SK-N-SH (cell line): ENCODE measurements at regions of chr1 and their contacts with region 1.

Region 1: DNA sequence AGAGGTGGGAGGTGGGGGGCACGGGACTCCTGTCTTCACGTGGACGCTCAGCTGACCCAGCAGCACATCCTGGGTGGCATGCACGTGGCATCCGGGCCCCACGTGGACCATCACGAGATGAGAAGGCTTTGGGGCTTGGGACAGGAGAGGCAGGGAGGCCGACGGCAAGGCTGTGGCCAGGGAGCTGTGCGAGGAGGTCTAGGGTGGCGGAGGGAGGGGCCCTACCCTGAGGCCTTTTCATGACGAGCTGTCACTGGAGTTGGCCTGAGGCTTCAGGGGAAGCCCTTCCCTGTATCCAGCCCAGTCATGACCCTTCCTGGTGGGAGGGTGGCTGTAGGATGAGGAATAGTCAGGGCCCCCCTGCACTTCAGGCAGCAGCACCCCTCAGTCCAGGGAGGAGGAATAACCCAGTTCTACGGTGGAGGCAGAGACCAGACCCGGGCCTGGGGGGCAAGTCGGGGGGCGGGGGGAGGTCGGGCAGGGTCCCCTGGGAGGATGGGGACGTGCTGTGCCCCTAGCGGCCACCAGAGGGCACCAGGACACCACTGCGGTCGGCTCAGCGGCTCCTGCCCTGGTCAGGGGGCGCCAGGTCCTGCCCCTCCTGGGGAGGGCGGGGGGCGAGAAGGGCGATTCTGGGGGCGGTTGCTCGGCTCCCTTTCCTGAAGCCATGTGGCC is 2.0 kb upstream of the PERM1 start:
- DNase-seq: peak; percentile 92
- H3K4me3 ChIP-seq: peak overlapping the region in 1 of 2 experiments; percentile 32; a peak in 1 of 4 replicates
- H3K27ac ChIP-seq: no peak overlapping the region
- H3K4me1 ChIP-seq: peaks cover 0 to 9% of the 10 kb centered on the region in 2 experiments; a peak in 1 of 4 replicates
- H3K27me3 ChIP-seq: peaks cover 30% of the 10 kb centered on the region; the same call in 1 of the 2 replicates
- CTCF ChIP-seq: peak; percentile 76
- EP300 ChIP-seq: no peak
- RAD21 ChIP-seq: peak; percentile 71

Region 2: DNA sequence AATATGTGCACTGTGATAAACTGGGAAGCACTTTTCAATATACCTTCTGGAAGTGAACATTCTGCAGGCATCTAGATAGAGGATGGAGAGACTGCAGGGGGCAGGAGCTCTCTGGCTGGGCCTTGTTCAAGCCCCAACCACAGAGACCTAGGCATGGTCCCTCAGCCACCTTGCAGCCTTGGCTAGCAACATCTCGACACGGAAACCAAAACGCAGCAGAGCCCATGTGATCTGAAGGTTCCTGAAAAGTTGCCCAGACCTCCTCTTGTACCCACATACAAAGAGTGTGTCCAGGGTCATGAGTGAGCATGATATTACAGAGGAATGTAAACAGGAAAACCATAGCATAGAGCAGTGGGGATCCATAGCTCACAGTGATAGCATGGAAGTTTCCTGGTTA is 93.3 kb before region 1 on chr1:
- CTCF ChIA-PET with region 1: no interaction called
- POLR2A ChIA-PET with region 1: no interaction called
- DNase-seq: no peak
- H3K4me3 ChIP-seq: no peak overlapping the region
- H3K27ac ChIP-seq: no peak overlapping the region
- H3K4me1 ChIP-seq: no peaks in the 10 kb centered on the region
- H3K27me3 ChIP-seq: peaks cover 12% of the 10 kb centered on the region
- CTCF ChIP-seq: no peak
- EP300 ChIP-seq: no peak
- RAD21 ChIP-seq: no peak

Region 3: DNA sequence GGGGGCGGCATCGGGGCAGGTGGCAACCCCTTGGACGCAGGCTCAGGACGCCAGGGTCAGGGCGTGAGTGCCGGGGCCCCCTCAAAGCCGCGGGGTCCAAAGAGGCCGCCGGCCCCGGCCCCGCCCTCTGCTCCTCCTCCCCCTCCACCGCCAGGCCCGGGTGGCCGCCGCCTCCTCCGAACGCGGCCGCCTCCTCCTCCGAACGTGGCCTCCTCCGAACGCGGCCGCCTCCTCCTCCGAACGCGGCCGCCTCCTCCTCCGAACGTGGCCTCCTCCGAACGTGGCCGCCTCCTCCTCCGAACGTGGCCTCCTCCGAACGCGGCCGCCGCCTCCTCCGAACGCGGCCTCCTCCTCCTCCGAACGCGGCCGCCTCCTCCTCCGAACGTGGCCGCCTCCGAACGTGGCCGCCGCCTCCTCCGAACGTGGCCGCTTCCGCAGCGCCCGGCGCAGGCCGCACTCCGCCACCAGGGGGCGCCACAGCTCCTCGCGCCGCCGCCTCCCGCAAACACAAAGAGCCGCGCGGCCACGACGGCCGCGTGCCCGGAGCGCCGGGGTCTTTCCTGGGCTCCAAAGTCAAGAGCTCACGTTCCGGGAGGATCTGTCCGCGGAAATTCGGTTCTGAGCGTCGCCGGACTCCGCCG is 79.5 kb before region 1 on chr1:
- CTCF ChIA-PET with region 1: interaction called, 13 read pairs
- POLR2A ChIA-PET with region 1: no interaction called
- DNase-seq: peak; percentile 93
- H3K4me3 ChIP-seq: peak overlapping the region; percentile 42 to 44; a peak in 3 of 4 replicates
- H3K27ac ChIP-seq: no peak overlapping the region; a peak in 1 of 4 replicates
- H3K4me1 ChIP-seq: peaks cover 0 to 18% of the 10 kb centered on the region in 2 experiments; a peak in 1 of 4 replicates
- H3K27me3 ChIP-seq: no peaks in the 10 kb centered on the region
- CTCF ChIP-seq: peak; percentile 62
- EP300 ChIP-seq: no peak
- RAD21 ChIP-seq: peak; percentile 82

Region 4: DNA sequence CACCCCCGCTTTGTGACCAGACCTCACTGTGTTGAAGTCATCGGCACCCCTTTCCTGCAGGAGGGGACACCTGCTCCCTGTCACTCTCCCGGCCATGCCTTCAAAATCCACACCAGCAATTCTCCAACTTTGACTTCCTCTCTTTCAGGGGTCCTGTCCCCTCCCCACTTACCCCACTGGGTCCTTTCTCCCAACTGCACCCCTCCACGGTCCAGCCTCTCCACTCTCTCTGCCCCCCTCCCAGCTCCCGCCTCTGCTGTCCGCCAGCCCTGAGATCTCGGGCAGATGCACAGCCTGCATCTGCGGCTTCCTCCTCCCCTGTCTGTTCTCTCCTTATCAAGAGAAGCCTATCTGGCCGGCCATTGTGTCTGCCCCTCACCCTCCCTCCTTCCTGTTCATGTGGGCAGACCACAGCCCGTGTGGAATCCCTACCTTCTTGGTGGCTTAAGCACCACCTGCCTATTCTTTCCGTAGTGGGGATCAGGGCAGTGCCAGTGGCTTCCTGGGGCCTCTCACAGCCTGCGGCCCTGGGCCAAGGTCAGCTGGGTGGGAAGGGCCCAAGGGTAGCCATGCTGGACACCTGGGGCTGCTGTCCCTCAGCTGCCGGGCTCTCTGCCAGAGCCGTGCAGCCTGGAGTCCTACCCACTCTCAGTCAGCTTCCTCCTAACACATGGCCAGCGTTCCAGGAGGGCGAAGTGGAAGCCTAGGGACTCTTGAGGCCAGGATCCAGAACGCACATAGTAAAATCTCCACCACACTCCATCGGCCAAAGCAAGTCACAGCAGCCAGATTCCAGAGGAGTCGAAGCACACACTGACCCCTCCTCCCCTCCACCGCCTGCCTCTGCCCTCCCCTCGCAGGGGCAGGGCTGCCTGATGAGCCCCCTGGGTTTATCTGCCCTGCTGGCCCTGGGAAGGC is 21.1 kb after region 1 on chr1:
- CTCF ChIA-PET with region 1: interaction called, 246 read pairs
- POLR2A ChIA-PET with region 1: no interaction called
- DNase-seq: peak; percentile 90
- H3K4me3 ChIP-seq: peak overlapping the region in 1 of 2 experiments; percentile 18; a peak in 1 of 4 replicates
- H3K27ac ChIP-seq: peak overlapping the region in 1 of 2 experiments; percentile 98; a peak in 2 of 4 replicates
- H3K4me1 ChIP-seq: peaks cover 0 to 43% of the 10 kb centered on the region in 2 experiments; a peak in 1 of 4 replicates
- H3K27me3 ChIP-seq: peaks cover 7% of the 10 kb centered on the region; the same call in 1 of the 2 replicates
- CTCF ChIP-seq: no peak
- EP300 ChIP-seq: peak in 1 of 2 experiments; percentile 25; a peak in 1 of 4 replicates
- RAD21 ChIP-seq: no peak

Region 5: DNA sequence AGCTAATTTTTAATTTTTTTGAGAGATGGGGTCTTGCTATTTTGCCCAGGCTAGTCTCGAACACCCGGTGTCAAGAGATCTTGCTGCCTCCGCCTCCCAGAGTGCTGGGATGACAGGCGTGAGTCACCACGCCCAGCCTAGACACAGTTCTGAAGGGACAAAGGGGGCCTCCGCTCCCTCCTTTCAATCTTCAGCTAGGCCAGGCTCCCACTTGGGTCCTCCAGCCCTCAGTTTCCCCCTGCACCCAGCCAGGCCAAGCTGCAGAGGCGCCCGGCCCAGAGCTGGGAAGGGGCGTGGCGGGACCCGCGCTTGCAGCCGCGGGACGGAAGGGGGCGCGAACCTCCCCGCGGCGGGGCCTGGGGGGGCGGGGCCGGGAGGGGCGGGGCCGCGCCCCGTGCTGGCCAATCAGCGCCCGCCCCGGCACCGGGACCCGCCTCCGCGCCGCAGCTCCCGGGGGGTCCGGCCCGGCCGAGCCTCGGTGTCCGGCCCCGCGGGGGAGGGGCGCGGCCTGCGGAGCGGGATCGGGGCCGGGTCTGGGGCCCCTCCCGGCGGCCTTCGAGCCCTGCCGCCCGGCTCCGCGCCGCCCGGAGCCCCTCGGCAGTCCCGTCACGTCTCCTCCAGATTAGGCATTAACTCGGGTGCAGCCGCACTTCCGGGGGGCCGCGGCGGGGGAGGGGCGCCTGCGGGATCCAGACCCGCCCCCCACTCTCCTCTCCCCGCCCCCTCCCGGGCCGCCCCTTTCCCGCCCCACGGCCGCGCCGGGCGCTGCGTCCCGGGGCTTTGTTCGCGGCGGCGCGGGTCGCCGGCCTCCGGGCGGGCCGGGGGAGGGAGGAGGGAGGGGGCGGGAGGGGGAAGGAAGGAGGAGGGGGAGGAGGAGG is 35.4 kb after region 1 on chr1:
- CTCF ChIA-PET with region 1: interaction called, 30 read pairs
- POLR2A ChIA-PET with region 1: interaction called, 3 read pairs
- DNase-seq: peak; percentile 99
- H3K4me3 ChIP-seq: peak overlapping the region in 1 of 2 experiments; percentile 50; a peak in 2 of 4 replicates
- H3K27ac ChIP-seq: peak overlapping the region in 1 of 2 experiments; percentile 81; a peak in 2 of 4 replicates
- H3K4me1 ChIP-seq: peaks cover 0 to 10% of the 10 kb centered on the region in 2 experiments; a peak in 1 of 4 replicates
- H3K27me3 ChIP-seq: no peaks in the 10 kb centered on the region
- CTCF ChIP-seq: peak; percentile 44
- EP300 ChIP-seq: no peak
- RAD21 ChIP-seq: no peak

Region 6: DNA sequence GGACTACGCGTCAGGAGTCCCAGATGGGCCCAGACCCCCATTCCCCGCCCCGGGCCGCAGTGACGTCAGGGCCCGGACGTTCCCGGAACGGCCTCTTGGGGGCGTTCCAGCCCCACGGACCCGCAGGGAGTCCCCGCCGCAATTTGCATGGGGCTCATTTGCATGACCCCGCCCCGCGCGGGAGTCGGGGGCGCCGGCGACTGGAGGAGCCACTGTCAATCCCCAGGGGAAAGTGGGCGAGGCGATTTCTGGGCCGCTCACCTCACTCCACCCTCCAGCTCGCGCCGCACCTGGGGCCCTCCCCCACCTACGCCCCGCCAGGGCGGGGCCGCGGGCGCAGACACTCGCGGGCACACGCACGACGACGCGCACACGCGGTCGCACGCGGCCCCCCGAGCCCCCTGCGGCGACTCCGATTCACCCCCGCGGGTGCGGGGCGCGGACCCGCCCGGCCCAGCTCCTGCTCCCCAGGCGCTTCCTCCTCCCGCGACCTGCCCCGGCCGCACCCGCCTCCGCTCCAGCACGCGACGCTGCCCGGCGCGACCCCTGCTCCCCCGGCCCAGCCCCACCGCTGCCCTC is 49.2 kb after region 1 on chr1:
- CTCF ChIA-PET with region 1: interaction called, 49 read pairs
- POLR2A ChIA-PET with region 1: no interaction called
- DNase-seq: peak; percentile 97
- H3K4me3 ChIP-seq: peak overlapping the region; percentile 44 to 47; a peak in 3 of 4 replicates
- H3K27ac ChIP-seq: no peak overlapping the region
- H3K4me1 ChIP-seq: peaks cover 0 to 11% of the 10 kb centered on the region in 2 experiments; a peak in 1 of 4 replicates
- H3K27me3 ChIP-seq: no peaks in the 10 kb centered on the region
- CTCF ChIP-seq: peak; percentile 63
- EP300 ChIP-seq: no peak
- RAD21 ChIP-seq: peak; percentile 83

Region 7: GRCh38 chr1:1059494-1060280 is 75.8 kb after region 1 on chr1:
- CTCF ChIA-PET with region 1: interaction called, 216 read pairs
- POLR2A ChIA-PET with region 1: no interaction called
- DNase-seq: peak; percentile 96
- H3K4me3 ChIP-seq: peak overlapping the region; percentile 51 to 56
- H3K27ac ChIP-seq: no peak overlapping the region
- H3K4me1 ChIP-seq: peaks cover 0 to 6% of the 10 kb centered on the region in 2 experiments; a peak in 1 of 4 replicates
- H3K27me3 ChIP-seq: peaks cover 20% of the 10 kb centered on the region; the same call in 1 of the 2 replicates
- CTCF ChIP-seq: no peak
- EP300 ChIP-seq: no peak
- RAD21 ChIP-seq: no peak

Region 8: DNA sequence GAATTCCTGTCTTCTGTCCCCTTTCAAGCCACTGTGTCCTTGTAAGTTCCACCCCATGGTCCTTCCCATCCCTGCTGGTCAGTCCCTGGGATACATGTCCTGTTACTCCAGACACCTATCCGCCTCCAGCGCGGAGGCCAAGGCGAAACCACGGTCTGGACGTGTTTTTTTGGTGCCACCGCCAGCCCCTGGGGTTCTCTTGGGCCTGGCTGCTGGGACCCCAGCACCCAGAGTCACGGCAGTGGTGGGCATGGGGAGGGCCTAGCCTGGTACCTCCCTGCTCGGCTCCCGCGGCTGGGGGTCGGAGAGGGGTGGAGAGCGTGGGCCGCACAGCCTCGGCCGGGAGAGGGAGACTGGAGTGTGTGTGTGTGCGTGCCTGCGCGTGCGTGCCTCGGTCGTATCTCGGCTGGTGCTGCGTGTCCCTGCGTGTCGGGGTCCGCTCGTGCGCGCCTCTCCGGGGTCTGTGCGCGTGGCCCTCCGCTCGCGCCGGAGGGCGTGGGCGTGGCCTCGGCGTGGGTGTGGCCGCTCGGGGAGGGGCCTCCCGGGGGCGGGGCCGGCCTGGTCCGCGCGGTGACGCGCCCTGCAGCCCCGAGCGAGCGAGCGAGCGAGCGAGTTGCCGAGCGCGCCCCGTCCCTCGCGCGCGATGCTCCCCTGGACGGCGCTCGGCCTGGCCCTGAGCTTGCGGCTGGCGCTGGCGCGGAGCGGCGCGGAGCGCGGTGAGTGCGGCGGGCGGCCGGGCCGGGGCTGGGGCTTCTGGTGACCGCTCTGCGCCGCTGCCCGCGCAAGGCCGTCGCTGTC is 451.4 kb after region 1 on chr1 and contains the start of gene VWA1:
- CTCF ChIA-PET with region 1: no interaction called
- POLR2A ChIA-PET with region 1: no interaction called
- DNase-seq: peak; percentile 99
- H3K4me3 ChIP-seq: peak within 1 kb of the TSS; percentile 46 to 47; a peak in 3 of 4 replicates
- H3K27ac ChIP-seq: no peak within 1 kb of the TSS; a peak in 1 of 4 replicates
- H3K4me1 ChIP-seq: peaks cover 0 to 25% of the 10 kb centered on the region in 2 experiments; a peak in 1 of 4 replicates
- H3K27me3 ChIP-seq: no peaks in the 10 kb centered on the region
- CTCF ChIP-seq: no peak
- EP300 ChIP-seq: no peak
- RAD21 ChIP-seq: no peak
- polyA plus RNA-seq, gene VWA1: 5.3 and 7.4 TPM in 2 replicates